ENCODE measurements at regions of chr18 and their contacts with region 1.

Region 1: DNA sequence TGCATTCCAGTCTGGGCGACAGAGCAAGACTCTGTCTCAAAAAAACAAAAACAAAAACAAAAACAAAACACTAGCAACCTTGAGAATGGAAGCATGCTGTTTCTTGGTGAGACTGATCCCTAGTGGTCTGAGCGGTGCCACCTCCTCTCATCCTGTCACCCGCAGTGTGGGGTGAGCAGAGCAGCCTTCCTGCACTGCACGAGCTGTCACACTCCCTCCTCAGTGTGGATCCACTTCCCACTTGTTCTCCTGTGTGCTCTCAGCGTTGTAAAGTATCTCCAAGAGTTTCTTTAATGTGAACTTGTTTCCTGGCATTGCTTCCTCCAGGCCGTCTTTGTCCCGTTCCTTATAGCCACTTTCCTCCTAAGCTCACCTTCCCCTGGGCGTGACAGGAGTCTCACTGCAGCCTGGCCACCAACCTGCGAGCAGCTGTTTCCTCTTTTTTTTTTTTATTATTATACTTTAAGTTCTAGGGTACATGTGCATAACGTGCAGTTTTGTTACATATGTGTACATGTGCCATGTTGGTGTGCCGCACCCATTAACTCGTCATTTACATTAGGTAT is 220.5 kb downstream of the FAM210A start:
- DNase-seq: no peak
- ATAC-seq: no peak
- H3K4me3 ChIP-seq: no peak overlapping the region
- H3K27ac ChIP-seq: no peak overlapping the region
- H3K4me1 ChIP-seq: no peaks in the 10 kb centered on the region
- H3K27me3 ChIP-seq: peaks cover 5% of the 10 kb centered on the region
- CTCF ChIP-seq: no peak
- POLR2A ChIP-seq: no peak
- RAD21 ChIP-seq: no peak

Region 2: GRCh38 chr18:13178976-13179375 is 326.9 kb before region 1 on chr18:
- CTCF ChIA-PET with region 1: no interaction called
- POLR2A ChIA-PET with region 1: no interaction called
- dilution Hi-C with region 1: no loop called
- in situ Hi-C with region 1: no loop called
- intact Hi-C with region 1: no loop called
- DNase-seq: peak; percentile 27
- ATAC-seq: no peak
- H3K4me3 ChIP-seq: no peak overlapping the region
- H3K27ac ChIP-seq: no peak overlapping the region
- H3K4me1 ChIP-seq: no peaks in the 10 kb centered on the region
- H3K27me3 ChIP-seq: peaks cover 20% of the 10 kb centered on the region
- CTCF ChIP-seq: no peak
- POLR2A ChIP-seq: no peak
- RAD21 ChIP-seq: no peak

Region 3: DNA sequence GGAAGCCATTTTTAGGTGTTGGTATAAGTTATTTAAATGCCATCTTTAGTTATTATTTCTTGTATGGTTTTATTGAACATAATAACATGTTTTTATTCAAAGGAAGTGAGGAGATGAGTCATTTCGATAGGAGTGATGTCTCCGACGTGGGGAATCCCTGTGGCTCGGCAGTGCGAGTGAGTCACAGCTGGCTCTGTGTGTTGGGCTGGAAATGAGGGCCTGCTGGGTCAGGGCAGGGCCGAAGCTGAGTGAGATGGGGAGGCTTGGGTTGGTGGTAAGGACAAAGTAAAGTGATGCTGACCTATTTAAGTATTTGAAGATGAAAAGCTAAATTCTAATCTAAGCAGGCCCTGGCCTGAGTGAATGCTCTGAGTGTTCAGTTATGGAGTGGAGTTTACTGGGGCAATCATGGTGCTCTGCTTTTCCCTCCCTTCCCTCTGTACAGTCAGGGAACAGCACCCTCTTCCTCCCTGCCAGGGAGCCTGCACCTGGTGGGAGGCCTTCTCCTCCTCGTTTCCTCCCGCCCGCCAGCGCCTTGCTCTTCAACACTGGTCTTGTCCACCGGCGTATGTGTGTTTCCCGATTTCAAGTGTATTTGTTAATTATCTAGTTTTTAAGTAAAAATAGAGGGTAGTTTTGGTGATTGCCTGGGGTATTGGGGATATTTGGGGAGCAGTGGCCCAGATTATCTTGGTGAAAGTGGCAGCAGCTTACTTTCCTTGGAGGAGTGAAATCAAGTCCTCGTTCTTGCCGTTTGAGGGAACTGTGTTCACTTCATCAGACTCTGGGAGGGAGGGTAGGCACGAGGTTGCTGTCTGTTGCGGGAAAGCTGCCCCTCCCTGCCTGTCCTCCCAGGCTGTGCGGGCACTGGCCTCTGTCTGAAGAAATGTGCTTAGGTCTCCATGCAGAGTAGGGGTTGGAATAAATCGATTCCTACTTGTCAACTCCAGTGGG is 130.3 kb before region 1 on chr18:
- CTCF ChIA-PET with region 1: no interaction called
- POLR2A ChIA-PET with region 1: no interaction called
- dilution Hi-C with region 1: no loop called
- in situ Hi-C with region 1: no loop called
- intact Hi-C with region 1: loop called (anchors 5 kb)
- DNase-seq: peak; percentile 91
- ATAC-seq: peak; percentile 99
- H3K4me3 ChIP-seq: no peak overlapping the region
- H3K27ac ChIP-seq: no peak overlapping the region
- H3K4me1 ChIP-seq: no peaks in the 10 kb centered on the region
- H3K27me3 ChIP-seq: no peaks in the 10 kb centered on the region
- CTCF ChIP-seq: no peak
- POLR2A ChIP-seq: no peak
- RAD21 ChIP-seq: no peak

Region 4: GRCh38 chr18:13548966-13549879 is 43.4 kb after region 1 on chr18:
- CTCF ChIA-PET with region 1: no interaction called
- POLR2A ChIA-PET with region 1: no interaction called
- dilution Hi-C with region 1: no loop called
- in situ Hi-C with region 1: no loop called
- intact Hi-C with region 1: no loop called
- DNase-seq: no peak
- ATAC-seq: no peak
- H3K4me3 ChIP-seq: no peak overlapping the region
- H3K27ac ChIP-seq: no peak overlapping the region
- H3K4me1 ChIP-seq: no peaks in the 10 kb centered on the region
- H3K27me3 ChIP-seq: peaks cover 8% of the 10 kb centered on the region
- CTCF ChIP-seq: no peak
- POLR2A ChIP-seq: no peak
- RAD21 ChIP-seq: no peak

Measured in IMR-90 (cell line).